ENCODE measurements at regions of chr1 and their contacts with region 1.

Region 1: DNA sequence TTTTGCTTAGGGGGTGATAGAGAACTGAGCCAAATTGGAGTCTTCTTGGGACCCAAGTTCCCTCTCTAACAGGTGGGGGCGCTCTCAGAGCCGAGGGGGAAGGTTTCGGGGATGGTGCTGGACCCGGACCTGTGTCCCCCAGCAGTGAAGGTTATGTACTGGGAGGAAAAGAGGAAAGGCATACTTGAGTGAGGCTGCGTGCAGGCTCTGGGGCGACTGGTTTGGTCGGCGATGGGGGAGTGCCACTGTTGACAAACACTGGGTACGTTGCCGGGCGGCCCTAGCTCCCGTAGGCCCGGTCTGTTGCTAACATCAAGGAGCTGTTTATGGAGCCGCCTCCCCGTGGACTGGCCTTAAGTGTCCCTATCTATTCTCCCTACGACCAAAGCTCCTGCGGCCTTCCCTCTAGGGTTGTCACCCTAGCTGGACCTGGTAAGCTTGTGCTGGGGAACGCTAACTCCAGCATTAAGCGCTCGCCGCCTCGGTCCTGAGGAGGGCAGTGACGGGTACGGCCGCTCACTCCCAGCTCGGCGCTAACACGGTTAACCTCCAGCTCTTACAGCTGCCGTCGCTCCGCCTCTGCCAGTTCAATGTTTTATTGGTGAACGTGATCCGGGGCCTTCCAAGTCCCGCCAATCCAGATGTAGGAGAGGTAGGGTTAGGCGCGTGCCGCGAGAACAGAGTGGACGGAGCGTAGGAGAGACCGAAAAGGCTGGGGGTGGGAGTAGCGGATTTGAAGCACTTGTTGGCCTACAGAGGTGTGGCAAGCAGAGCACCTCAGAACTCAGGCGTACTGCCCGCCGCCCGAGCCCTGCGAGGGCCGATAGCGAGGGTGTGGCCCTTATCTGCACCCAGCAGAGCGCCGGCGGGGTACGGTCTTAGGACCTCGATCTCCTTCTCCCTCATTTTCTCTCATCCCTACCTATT is at the start of gene PPOX:
- DNase-seq: peak; percentile 98
- ATAC-seq: peak; percentile 93
- H3K4me3 Mint-ChIP-seq: peak within 1 kb of the TSS; percentile 90
- H3K27ac Mint-ChIP-seq: peak within 1 kb of the TSS; percentile 96
- H3K4me1 Mint-ChIP-seq: peaks cover 36% of the 10 kb centered on the region
- H3K27me3 Mint-ChIP-seq: no peaks in the 10 kb centered on the region
- total RNA-seq, gene PPOX: 37.7 to 38.5 TPM

Region 2: DNA sequence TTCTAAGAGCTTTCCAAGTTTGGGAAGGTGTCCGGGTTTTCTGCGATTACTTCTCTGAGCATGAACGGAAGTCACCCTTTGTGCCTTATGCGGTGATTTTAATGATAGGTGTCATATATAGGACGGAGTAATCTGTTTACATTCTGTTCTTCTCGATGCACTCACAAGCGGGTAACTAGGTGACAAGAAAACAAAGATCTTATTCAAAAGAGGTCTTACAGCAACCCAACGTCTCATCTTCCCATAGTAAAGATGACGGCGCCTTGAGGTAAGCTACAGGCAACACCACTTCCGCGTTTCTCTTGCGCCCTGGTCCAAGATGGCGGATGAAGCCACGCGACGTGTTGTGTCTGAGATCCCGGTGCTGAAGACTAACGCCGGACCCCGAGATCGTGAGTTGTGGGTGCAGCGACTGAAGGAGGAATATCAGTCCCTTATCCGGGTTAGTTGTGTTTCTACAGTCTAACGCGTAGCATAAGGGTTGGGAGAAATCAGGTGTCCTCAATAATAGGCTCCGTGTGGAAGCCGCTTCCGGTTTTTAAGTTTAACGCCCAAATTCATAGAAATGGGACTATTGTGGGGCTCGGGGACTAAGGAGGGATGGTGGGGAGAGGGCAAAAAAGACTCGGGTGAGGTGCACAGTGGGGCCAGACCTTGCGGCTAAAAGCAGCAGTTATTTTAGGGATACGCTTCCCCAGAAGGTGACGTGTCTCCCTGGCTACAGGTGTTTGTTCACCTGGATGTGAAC is 12.2 kb before region 1 on chr1 and contains the start of gene UFC1:
- CTCF ChIA-PET with region 1: interaction called, 38 read pairs
- POLR2A ChIA-PET with region 1: interaction called, 51 read pairs
- DNase-seq: peak; percentile 91
- ATAC-seq: peak; percentile 94
- H3K4me3 Mint-ChIP-seq: peak within 1 kb of the TSS; percentile 88
- H3K27ac Mint-ChIP-seq: peak within 1 kb of the TSS; percentile 100
- H3K4me1 Mint-ChIP-seq: peaks cover 26% of the 10 kb centered on the region
- H3K27me3 Mint-ChIP-seq: no peaks in the 10 kb centered on the region
- total RNA-seq, gene UFC1: 103 to 104 TPM

Region 3: GRCh38 chr1:161185282-161185682 is 19.3 kb after region 1 on chr1:
- CTCF ChIA-PET with region 1: interaction called, 39 read pairs
- POLR2A ChIA-PET with region 1: interaction called, 40 read pairs
- DNase-seq: peak; percentile 90
- ATAC-seq: peak; percentile 83
- H3K4me3 Mint-ChIP-seq: peak overlapping the region; percentile 62
- H3K27ac Mint-ChIP-seq: peak overlapping the region; percentile 91
- H3K4me1 Mint-ChIP-seq: peaks cover 79% of the 10 kb centered on the region
- H3K27me3 Mint-ChIP-seq: no peaks in the 10 kb centered on the region

Region 4: DNA sequence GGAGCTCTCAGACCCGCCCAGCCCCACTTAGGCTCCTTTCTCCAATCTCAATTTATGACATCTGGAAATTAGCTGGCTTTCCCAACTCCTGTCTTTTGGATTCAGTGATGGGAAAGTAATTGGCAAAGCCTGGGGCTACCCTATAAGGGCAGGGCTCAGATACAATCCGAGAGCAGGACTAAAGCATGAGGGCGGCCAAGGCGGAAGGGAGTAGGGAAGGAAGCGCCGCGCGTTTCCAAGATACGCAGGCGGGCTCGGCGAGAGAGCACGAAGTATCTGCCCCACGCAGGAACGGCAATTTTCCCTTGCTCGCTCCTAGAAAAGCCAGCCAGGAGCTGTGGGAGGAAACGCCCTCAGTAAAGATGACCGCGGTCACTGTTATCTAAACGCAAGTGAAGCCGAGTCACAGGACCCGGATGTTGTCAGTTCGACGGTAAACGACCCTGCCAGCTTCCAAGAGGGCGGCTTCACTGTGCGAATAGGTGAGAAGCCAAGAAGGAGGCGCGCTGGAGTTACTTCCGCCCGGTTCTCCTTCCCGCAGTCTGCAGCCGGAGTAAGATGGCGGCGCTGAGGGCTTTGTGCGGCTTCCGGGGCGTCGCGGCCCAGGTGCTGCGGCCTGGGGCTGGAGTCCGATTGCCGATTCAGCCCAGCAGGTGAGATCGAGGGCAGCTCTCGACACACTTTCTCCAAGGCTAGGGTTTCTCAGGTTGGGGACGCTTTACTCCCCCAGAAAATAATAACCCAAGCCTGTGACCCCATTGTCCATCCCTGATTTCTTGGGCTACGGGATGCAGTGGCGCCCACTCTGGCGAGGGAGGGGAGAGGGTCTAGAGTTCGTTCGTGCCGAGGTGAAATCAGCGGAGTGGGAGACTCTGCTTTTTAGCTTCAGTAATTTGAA is 36.1 kb after region 1 on chr1 and contains the start of gene NDUFS2:
- CTCF ChIA-PET with region 1: interaction called, 16 read pairs
- POLR2A ChIA-PET with region 1: interaction called, 18 read pairs
- DNase-seq: peak; percentile 99
- ATAC-seq: peak; percentile 99
- H3K4me3 Mint-ChIP-seq: peak within 1 kb of the TSS; percentile 93
- H3K27ac Mint-ChIP-seq: peak within 1 kb of the TSS; percentile 95
- H3K4me1 Mint-ChIP-seq: peaks cover 78% of the 10 kb centered on the region
- H3K27me3 Mint-ChIP-seq: no peaks in the 10 kb centered on the region
- total RNA-seq, gene NDUFS2: 73.6 to 76.8 TPM